ENCODE measurements at regions of chr4 and their contacts with region 1.

Region 1: GRCh38 chr4:144709793-144710525 is 64.0 kb downstream of the HHIP start:
- DNase-seq: no peak
- H3K4me3 ChIP-seq: no peak overlapping the region
- CTCF ChIP-seq: no peak
- POLR2A ChIP-seq: no peak

Region 2: DNA sequence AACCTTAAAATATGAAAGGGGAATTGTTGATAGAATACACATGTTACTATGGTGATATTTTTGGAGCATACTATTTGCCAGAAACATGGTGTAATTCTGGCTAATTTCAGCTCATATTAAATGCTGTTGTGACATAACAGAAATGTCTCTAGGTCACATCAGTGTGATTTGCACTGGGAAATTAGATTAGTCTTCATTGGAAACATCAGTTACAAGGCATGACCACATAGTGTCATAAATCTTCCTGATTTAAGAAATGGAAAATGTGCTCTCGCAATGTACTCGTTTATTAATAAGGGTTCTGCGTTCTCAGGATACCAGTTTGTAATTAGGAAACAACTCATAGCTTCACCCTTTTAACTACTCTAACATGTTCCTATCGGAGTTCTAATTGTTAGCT is 496.6 kb before region 1 on chr4:
- intact Hi-C with region 1: no loop called
- DNase-seq: no peak
- H3K4me3 ChIP-seq: no peak overlapping the region
- CTCF ChIP-seq: no peak
- POLR2A ChIP-seq: no peak

Region 3: GRCh38 chr4:145881989-145882388 is 1172.0 kb after region 1 on chr4:
- intact Hi-C with region 1: loop called (anchors 5 kb)
- DNase-seq: peak in 1 of 2 donors; percentile 62
- H3K4me3 ChIP-seq: no peak overlapping the region
- CTCF ChIP-seq: no peak
- POLR2A ChIP-seq: no peak

Measured in lower leg skin (tissue), 4 donors.